Heart left ventricle (tissue), 16 donors: ENCODE measurements at regions of chr15 and their contacts with region 1.

Region 1: GRCh38 chr15:74179341-74179841 is 5.9 kb downstream of the ISLR start:
- DNase-seq: peak; percentile 79 to 90 (median 88)
- ATAC-seq: peak; percentile 73 to 91 (median 88)
- H3K4me3 ChIP-seq: peak overlapping the region in 1 of 12 donors; percentile 9
- H3K27ac ChIP-seq: peak overlapping the region; percentile 28 to 88 (median 68)
- H3K4me1 ChIP-seq: peaks cover 0 to 63% (median 45%) of the 10 kb centered on the region in 12 donors
- H3K27me3 ChIP-seq: no peaks in the 10 kb centered on the region
- CTCF ChIP-seq: no peak
- POLR2A ChIP-seq: no peak

Region 2: GRCh38 chr15:73851689-73852088 is 327.7 kb before region 1 on chr15:
- intact Hi-C with region 1: no loop called
- DNase-seq: peak in 2 of 5 donors; percentile 45 to 48
- ATAC-seq: no peak
- H3K4me3 ChIP-seq: no peak overlapping the region
- H3K27ac ChIP-seq: no peak overlapping the region
- H3K4me1 ChIP-seq: peaks cover 0 to 10% (median 0%) of the 10 kb centered on the region in 12 donors
- H3K27me3 ChIP-seq: no peaks in the 10 kb centered on the region
- CTCF ChIP-seq: no peak
- POLR2A ChIP-seq: no peak

Region 3: DNA sequence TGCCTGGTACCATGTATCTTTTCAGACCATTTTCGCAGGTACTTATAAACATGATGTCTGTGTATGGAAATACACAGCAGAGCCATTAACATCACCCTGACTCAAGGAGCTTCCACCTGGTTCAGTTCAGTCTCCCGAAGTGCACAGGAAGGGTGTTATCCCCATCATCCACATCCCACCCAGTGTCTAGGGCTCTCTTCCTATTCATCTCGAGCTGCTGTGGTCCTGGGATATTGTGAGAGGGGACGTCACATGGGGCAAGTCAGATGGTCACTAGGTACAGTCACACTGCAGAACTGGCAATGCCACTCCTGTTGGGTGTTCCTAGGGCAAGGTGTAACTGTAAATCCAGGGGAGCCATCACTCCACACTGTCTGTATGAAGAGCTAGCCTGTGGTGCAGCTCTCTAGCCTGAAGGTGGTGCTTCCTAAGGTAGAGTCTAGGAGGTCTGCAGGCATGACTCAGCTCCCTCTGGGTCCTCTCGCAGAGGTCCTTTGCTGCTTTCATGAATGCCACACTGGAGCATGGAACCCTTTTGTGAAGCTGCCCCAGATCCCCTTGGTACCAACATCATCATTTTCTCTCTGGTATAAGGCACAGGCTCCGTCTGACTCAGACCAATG is 35.1 kb before region 1 on chr15:
- intact Hi-C with region 1: loop called in 5 of 10 experiments (anchors 5 kb)
- DNase-seq: no peak
- ATAC-seq: no peak
- H3K4me3 ChIP-seq: no peak overlapping the region
- H3K27ac ChIP-seq: no peak overlapping the region
- H3K4me1 ChIP-seq: no peaks in the 10 kb centered on the region
- H3K27me3 ChIP-seq: peaks cover 0 to 11% (median 0%) of the 10 kb centered on the region in 9 donors
- CTCF ChIP-seq: no peak
- POLR2A ChIP-seq: no peak

Region 4: GRCh38 chr15:74228723-74229081 is 49.3 kb after region 1 on chr15:
- intact Hi-C with region 1: loop called in 1 of 10 experiments (anchors 5 kb)
- DNase-seq: peak in 1 of 5 donors; percentile 16
- ATAC-seq: peak in 2 of 4 donors; percentile 22 to 30
- H3K4me3 ChIP-seq: peak overlapping the region in 4 of 12 donors; percentile 11 to 28 (median 20)
- H3K27ac ChIP-seq: peak overlapping the region in 5 of 12 donors; percentile 10 to 64 (median 24)
- H3K4me1 ChIP-seq: peaks cover 0 to 17% (median 12%) of the 10 kb centered on the region in 12 donors
- H3K27me3 ChIP-seq: peaks cover 0 to 4% (median 0%) of the 10 kb centered on the region in 9 donors
- CTCF ChIP-seq: no peak
- POLR2A ChIP-seq: no peak